PC-9 (cell line): ENCODE measurements at regions of chr9 and their contacts with region 1.

Region 1: GRCh38 chr9:108444400-108445358 is 411.1 kb downstream of the ACTL7B start:
- DNase-seq: peak; percentile 71 to 95
- H3K4me3 ChIP-seq: peak overlapping the region; percentile 34; the same call in 1 of the 2 replicates
- H3K27ac ChIP-seq: peak overlapping the region; percentile 80
- H3K4me1 ChIP-seq: peaks cover 45% of the 10 kb centered on the region
- H3K27me3 ChIP-seq: no peaks in the 10 kb centered on the region
- CTCF ChIP-seq: no peak

Region 2: DNA sequence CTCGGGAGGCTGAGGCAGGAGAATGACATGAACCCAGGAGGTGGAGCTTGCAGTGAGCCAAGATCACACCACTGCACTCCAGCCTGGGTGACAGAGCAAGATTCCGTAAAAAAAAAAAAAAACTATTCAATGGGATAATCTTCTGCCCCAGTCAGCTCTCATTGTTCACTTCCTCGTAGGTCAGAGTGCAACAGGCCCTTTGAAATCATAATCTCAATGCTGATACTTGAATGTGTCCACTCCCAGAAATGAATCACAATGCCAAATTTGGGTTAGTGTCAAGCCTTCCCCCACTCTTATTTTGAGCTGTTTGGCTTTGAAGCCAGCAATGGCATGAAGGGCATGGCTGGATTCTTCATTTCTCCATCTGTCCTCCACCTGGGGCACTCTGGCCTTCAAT is 344.8 kb before region 1 on chr9:
- CTCF ChIA-PET with region 1: no interaction called
- POLR2A ChIA-PET with region 1: no interaction called
- intact Hi-C with region 1: loop called (anchors 2 kb)
- DNase-seq: peak; percentile 64 to 96
- H3K4me3 ChIP-seq: no peak overlapping the region
- H3K27ac ChIP-seq: peak overlapping the region; percentile 89
- H3K4me1 ChIP-seq: peaks cover 30% of the 10 kb centered on the region
- H3K27me3 ChIP-seq: no peaks in the 10 kb centered on the region
- CTCF ChIP-seq: no peak

Region 3: DNA sequence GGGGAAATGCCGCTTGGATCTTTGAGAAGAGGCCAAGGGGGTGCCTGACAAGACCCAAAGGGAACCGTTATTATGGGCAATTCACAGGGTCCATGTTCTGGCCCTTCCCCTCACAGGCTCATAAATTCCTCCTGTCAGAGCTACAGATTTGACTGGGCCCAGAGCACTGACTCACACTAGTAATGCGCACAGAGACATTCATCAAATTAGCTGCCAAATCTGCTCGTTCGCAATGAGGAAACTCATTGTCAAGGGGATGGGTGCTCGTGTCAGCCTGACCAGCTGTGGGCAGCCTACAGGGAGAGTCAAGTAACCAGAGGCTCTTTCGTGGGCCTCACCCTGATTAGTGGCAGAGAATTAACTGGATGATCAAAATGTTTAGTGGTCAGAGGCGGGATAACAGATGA is 33.8 kb after region 1 on chr9:
- CTCF ChIA-PET with region 1: no interaction called
- POLR2A ChIA-PET with region 1: interaction called, 4 read pairs
- intact Hi-C with region 1: loop called (anchors 2 kb)
- DNase-seq: peak; percentile 57 to 93
- H3K4me3 ChIP-seq: no peak overlapping the region
- H3K27ac ChIP-seq: peak overlapping the region; percentile 87
- H3K4me1 ChIP-seq: peaks cover 48% of the 10 kb centered on the region
- H3K27me3 ChIP-seq: no peaks in the 10 kb centered on the region
- CTCF ChIP-seq: no peak

Region 4: DNA sequence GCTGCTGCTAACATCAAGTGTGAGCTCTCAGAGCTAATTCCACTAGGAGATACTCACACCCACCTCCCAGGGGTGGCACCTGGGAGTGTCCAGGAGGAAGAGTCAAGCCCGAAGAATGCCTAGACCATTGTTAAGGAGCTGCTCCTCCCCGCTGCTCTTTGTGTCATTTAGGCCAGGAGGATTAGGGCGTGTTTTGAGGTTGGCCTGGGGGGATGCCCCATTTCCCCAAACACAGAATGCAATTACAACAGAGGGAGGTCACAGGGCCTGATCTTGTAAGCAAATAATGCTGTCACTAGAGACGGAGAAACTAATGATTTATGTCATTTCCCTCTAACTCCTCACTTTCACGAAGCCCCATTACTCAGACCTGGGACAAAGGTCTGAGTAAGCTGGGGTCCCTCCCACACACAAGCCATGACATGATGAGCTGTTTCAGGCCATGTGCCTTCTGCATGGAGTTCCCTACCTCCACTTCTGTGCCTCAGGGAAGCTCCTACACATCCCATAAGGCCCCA is 98.6 kb after region 1 on chr9:
- CTCF ChIA-PET with region 1: no interaction called
- POLR2A ChIA-PET with region 1: no interaction called
- intact Hi-C with region 1: loop called (anchors 1 kb)
- DNase-seq: peak; percentile 92 to 99
- H3K4me3 ChIP-seq: no peak overlapping the region; the same call in 1 of the 2 replicates
- H3K27ac ChIP-seq: peak overlapping the region; percentile 73
- H3K4me1 ChIP-seq: peaks cover 24% of the 10 kb centered on the region
- H3K27me3 ChIP-seq: no peaks in the 10 kb centered on the region
- CTCF ChIP-seq: 0 out of 2 replicates have a peak, but pooled peaks have one; percentile 14

Region 5: DNA sequence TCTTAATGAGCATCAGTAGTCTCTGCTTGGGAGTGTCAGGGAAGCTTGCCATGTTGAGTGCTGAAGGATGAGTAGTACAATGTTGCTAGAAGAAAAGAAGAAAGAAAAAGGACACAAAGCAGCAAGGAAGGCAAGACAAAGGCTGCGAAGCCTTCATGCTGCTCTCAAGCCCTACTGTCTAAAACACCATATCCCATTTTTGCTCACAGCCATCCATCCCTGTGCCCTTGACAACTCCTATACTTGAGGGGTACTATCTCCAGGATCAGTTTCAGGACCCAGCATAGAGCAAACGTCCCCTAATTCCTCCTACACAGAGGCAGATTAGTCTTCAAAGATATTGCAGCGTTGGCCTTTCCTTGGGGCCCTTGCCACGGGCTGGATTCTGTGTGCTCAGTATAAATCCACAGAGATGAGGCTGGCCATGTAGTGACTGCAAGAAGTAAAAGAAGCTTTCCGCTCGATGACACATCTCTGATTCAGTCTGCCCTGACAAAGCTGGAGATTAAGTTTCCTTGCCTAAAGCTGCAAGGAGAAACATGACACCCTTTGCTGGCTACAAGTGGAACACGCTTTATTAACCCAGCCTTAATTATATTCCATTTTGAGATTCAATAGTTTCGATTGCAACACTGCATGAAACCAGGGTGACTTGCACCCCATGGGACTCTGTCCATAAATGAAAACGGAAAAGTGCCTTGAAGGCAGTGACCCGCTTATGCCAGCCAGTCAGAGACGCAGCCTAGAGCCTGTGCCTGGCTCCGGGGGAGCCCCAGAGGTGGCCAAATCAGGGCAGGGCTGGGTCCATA is 106.6 kb after region 1 on chr9:
- CTCF ChIA-PET with region 1: interaction called, 3 read pairs
- POLR2A ChIA-PET with region 1: no interaction called
- intact Hi-C with region 1: loop called (anchors 2 kb)
- DNase-seq: peak; percentile 75 to 99
- H3K4me3 ChIP-seq: peak overlapping the region; percentile 38; the same call in 1 of the 2 replicates
- H3K27ac ChIP-seq: peak overlapping the region; percentile 99
- H3K4me1 ChIP-seq: peaks cover 59% of the 10 kb centered on the region
- H3K27me3 ChIP-seq: no peaks in the 10 kb centered on the region
- CTCF ChIP-seq: no peak

Region 6: GRCh38 chr9:109119439-109120203 is 674.9 kb after region 1 on chr9 and contains the start of gene TMEM245:
- CTCF ChIA-PET with region 1: no interaction called
- POLR2A ChIA-PET with region 1: no interaction called
- intact Hi-C with region 1: no loop called
- DNase-seq: peak; percentile 95 to 97
- H3K4me3 ChIP-seq: peak within 1 kb of the TSS; percentile 81
- H3K27ac ChIP-seq: peak within 1 kb of the TSS; percentile 38
- H3K4me1 ChIP-seq: peaks cover 35% of the 10 kb centered on the region
- H3K27me3 ChIP-seq: no peaks in the 10 kb centered on the region
- CTCF ChIP-seq: no peak
- total RNA-seq, gene TMEM245: 58.7 and 60.3 TPM in 2 replicates